B cell (primary cell): ENCODE measurements at regions of chr1 and their contacts with region 1.

Region 1: DNA sequence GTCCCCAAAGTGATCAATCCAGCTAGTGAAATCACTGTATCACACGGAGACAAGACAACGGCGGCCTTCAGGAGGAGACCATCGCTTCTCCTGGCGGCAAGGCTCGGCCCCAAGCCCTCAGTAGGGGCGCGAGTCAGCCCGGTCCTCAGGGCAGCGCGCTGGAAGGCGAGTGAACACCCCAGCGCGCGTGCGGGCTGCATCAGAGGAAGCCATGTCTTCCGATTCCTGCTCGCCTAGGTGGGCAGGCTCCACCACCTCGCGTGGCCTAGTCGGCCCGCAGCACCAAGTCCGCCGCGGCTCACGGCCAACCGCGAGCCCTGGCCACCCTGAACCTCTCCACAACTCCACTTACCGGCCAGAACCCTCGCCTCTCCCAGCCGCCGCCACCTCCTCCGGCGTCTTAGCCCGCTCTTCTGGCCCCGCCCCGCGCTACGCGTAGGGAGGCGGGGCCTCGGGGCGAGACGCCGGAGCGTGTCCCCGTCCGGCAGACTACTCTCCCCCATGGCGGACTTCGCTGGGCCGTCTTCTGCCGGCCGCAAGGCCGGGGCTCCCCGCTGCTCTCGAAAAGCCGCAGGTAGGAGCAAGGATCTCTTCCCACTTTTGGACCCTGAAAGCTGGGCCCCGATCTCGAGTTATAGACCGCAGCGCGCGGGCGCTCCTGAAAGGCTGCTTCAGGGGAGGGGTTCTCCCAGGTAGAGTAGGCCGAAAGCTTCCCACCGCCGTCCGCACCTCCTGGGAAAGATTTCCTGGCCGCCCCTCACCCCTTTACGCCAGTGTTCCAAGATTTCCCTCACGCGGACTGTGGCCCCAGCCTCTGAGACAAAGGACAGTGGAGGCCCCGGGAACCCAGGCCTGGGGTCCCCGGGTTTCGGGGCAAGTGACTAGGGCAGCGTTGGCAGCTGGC is at the starts of genes GLMN and RPAP2:
- DNase-seq: peak; percentile 90
- ATAC-seq: peak; percentile 95
- H3K4me3 ChIP-seq: peak within 1 kb of the TSS; percentile 58 to 94 (median 90)
- H3K4me3 Mint-ChIP-seq: peak within 1 kb of the TSS; percentile 100
- H3K27ac ChIP-seq: peak within 1 kb of the TSS; percentile 92 to 95
- H3K27ac Mint-ChIP-seq: peak within 1 kb of the TSS; percentile 98
- H3K4me1 ChIP-seq: peaks cover 9 to 17% of the 10 kb centered on the region in 2 donors
- H3K4me1 Mint-ChIP-seq: peaks cover 27% of the 10 kb centered on the region
- H3K27me3 ChIP-seq: no peaks in the 10 kb centered on the region
- H3K27me3 Mint-ChIP-seq: no peaks in the 10 kb centered on the region
- CTCF ChIP-seq: peak; percentile 20
- total RNA-seq, gene GLMN: 13.6 and 15.7 TPM in 2 replicates
- total RNA-seq, gene RPAP2: 31.6 and 33.8 TPM in 2 replicates

Region 2: GRCh38 chr1:91500756-91501522 is 797.9 kb before region 1 on chr1 and contains the start of gene CDC7:
- CTCF ChIA-PET with region 1: no interaction called
- POLR2A ChIA-PET with region 1: no interaction called
- intact Hi-C with region 1: loop called (anchors 5 kb)
- DNase-seq: peak; percentile 92
- ATAC-seq: peak; percentile 87
- H3K4me3 ChIP-seq: peak within 1 kb of the TSS; percentile 85 to 95 (median 90)
- H3K4me3 Mint-ChIP-seq: no peak within 1 kb of the TSS
- H3K27ac ChIP-seq: peak within 1 kb of the TSS; percentile 61 to 82
- H3K27ac Mint-ChIP-seq: no peak within 1 kb of the TSS
- H3K4me1 ChIP-seq: peaks cover 14 to 15% of the 10 kb centered on the region in 2 donors
- H3K4me1 Mint-ChIP-seq: peaks cover 17% of the 10 kb centered on the region
- H3K27me3 ChIP-seq: no peaks in the 10 kb centered on the region
- H3K27me3 Mint-ChIP-seq: no peaks in the 10 kb centered on the region
- CTCF ChIP-seq: peak; percentile 59
- total RNA-seq, gene CDC7: 7.4 and 8.7 TPM in 2 replicates

Region 3: DNA sequence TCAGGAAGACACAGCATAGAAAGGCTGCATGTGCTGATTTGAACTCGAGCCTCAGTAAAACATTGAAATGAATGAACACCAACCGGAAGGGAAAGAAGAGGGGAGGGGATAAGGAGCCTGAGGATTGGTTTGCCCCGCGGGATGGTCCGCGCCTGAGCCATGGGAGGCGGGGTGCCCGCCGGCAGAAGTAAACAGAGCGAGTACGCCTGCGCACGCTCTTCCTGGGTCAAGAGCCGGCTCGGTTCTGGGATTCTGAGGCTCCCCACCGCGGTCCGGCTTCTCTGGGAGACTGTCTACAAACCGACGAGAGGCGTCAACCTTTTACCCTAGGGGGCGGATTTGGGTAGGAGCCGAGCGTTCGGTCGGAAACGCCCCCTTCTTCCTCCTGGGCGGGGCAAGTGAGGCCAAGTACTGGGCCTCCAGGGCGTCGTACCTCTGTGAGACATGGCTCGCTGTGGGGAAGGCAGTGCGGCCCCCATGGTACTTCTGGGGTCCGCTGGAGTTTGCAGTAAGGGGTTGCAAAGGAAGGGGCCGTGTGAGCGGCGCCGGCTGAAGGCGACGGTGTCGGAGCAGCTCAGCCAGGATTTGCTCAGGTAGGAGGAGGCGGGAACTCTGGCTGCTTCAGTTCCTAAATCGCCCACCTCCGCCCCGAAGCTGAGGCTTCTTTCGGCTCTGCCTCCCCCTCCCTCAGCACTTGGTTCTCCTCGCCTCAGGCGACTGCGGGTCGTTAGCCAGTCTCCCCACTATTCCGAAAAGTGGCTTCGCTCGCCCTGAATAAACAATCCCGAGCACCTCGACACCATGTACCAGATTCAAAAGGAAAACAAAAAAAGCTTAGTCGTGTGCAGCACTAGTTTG is 218.5 kb before region 1 on chr1 and contains the start of gene BTBD8:
- CTCF ChIA-PET with region 1: no interaction called
- POLR2A ChIA-PET with region 1: no interaction called
- intact Hi-C with region 1: loop called (anchors 1 kb)
- DNase-seq: peak; percentile 84
- ATAC-seq: peak; percentile 99
- H3K4me3 ChIP-seq: peak within 1 kb of the TSS; percentile 44 to 75 (median 74)
- H3K4me3 Mint-ChIP-seq: peak within 1 kb of the TSS; percentile 98
- H3K27ac ChIP-seq: peak within 1 kb of the TSS in 1 of 2 donors; percentile 39
- H3K27ac Mint-ChIP-seq: peak within 1 kb of the TSS; percentile 84
- H3K4me1 ChIP-seq: peaks cover 0 to 11% of the 10 kb centered on the region in 2 donors
- H3K4me1 Mint-ChIP-seq: peaks cover 12% of the 10 kb centered on the region
- H3K27me3 ChIP-seq: no peaks in the 10 kb centered on the region
- H3K27me3 Mint-ChIP-seq: peaks cover 4% of the 10 kb centered on the region
- CTCF ChIP-seq: no peak
- total RNA-seq, gene BTBD8: 1.9 and 2.1 TPM in 2 replicates

Region 4: GRCh38 chr1:92310185-92310597 is 11.4 kb after region 1 on chr1:
- CTCF ChIA-PET with region 1: interaction called, 11 read pairs
- POLR2A ChIA-PET with region 1: no interaction called
- intact Hi-C with region 1: no loop called
- DNase-seq: peak; percentile 26
- ATAC-seq: no peak
- H3K4me3 ChIP-seq: no peak overlapping the region
- H3K4me3 Mint-ChIP-seq: no peak overlapping the region
- H3K27ac ChIP-seq: no peak overlapping the region
- H3K27ac Mint-ChIP-seq: no peak overlapping the region
- H3K4me1 ChIP-seq: no peaks in the 10 kb centered on the region
- H3K4me1 Mint-ChIP-seq: no peaks in the 10 kb centered on the region
- H3K27me3 ChIP-seq: no peaks in the 10 kb centered on the region
- H3K27me3 Mint-ChIP-seq: no peaks in the 10 kb centered on the region
- CTCF ChIP-seq: peak; percentile 76

Region 5: DNA sequence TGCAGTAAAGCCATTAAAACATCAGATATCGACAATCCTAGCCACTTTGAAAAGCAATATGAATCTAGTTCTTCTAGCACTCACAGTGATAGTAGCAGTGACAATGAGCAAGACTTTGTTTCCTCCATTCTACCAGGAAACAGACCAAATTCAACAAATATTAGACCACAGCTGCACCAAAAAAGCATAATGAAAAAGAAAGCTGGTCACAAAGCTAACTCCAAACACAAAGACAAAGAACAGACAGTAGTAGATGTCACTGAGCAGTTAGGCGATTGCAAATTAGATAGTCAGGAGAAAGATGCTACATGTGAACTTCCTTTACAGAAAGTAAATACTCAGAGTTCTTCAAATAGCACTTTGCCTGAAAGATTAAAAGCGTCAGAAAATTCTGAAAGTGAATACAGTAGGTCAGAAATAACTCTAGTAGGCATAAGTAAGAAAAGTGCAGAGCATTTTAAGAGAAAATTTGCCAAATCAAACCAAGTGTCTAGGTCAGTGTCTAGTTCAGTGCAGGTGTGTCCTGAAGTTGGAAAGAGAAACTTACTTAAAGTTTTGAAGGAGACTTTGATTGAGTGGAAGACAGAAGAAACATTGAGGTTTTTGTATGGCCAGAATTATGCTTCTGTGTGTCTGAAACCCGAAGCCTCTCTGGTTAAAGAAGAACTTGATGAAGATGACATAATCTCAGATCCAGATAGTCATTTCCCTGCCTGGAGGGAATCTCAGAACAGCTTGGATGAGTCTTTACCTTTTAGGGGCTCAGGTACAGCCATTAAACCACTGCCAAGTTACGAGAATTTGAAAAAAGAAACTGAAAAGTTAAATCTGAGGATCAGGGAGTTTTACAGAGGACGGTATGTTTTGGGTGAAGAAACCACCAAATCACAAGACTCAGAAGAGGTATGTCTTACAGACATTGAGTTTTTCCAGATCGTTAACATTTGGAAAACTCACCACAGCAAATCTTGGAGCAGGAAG is 24.9 kb after region 1 on chr1:
- CTCF ChIA-PET with region 1: no interaction called
- POLR2A ChIA-PET with region 1: no interaction called
- intact Hi-C with region 1: no loop called
- DNase-seq: no peak
- ATAC-seq: no peak
- H3K4me3 ChIP-seq: no peak overlapping the region
- H3K4me3 Mint-ChIP-seq: no peak overlapping the region
- H3K27ac ChIP-seq: no peak overlapping the region
- H3K27ac Mint-ChIP-seq: no peak overlapping the region
- H3K4me1 ChIP-seq: no peaks in the 10 kb centered on the region
- H3K4me1 Mint-ChIP-seq: no peaks in the 10 kb centered on the region
- H3K27me3 ChIP-seq: no peaks in the 10 kb centered on the region
- H3K27me3 Mint-ChIP-seq: no peaks in the 10 kb centered on the region
- CTCF ChIP-seq: no peak

Region 6: DNA sequence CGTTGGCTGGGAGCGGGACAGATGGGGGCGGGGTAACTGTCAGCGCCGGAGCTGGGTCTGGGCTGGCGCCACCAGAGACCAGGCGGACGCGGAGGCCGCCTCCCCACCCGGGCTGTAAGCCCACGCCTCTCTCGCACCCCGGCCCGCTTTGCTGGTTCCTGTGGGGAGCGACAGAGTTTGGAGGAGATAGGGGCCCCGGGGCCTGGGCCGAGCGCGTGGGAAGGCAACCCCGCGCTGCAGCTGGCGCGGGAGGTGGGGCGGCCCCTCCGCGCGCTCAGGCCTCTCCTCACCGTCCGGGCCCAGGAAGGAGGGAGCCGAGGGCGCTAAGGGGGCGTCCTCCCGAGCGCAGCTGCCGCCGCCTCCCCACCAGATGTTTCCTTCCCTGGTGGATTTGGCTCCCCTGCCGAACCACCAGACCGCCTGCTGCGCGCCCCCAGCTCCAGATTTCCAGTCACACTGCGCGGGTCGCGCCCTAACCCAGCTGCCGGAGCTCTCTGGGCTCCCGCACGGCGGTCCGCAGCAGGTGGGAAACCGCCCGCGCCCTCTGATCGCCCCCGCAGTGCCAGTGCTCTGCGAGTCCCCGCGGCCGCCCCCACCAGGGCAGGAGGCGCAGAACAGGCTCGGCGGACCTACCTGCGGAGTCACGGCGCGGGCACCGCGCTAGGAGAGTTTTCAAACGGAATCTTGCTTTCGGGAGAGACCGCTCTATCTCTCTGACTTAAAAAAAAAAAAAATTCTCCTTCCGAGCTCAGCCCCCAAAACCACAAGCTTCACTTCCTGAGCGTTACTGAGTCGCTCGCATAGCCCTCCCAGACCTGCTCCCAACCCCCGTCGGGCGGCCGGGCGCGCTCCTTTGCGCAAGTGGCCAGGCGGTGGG is 186.8 kb after region 1 on chr1:
- CTCF ChIA-PET with region 1: no interaction called
- POLR2A ChIA-PET with region 1: no interaction called
- intact Hi-C with region 1: loop called (anchors 5 kb)
- DNase-seq: peak; percentile 72
- ATAC-seq: peak; percentile 67
- H3K4me3 ChIP-seq: peak overlapping the region; percentile 42 to 70 (median 60)
- H3K4me3 Mint-ChIP-seq: peak overlapping the region; percentile 87
- H3K27ac ChIP-seq: no peak overlapping the region
- H3K27ac Mint-ChIP-seq: no peak overlapping the region
- H3K4me1 ChIP-seq: peaks cover 31 to 40% of the 10 kb centered on the region in 2 donors
- H3K4me1 Mint-ChIP-seq: peaks cover 32% of the 10 kb centered on the region
- H3K27me3 ChIP-seq: peaks cover 0 to 54% (median 19%) of the 10 kb centered on the region in 4 experiments
- H3K27me3 Mint-ChIP-seq: peaks cover 28% of the 10 kb centered on the region
- CTCF ChIP-seq: peak; percentile 64

Region 7: DNA sequence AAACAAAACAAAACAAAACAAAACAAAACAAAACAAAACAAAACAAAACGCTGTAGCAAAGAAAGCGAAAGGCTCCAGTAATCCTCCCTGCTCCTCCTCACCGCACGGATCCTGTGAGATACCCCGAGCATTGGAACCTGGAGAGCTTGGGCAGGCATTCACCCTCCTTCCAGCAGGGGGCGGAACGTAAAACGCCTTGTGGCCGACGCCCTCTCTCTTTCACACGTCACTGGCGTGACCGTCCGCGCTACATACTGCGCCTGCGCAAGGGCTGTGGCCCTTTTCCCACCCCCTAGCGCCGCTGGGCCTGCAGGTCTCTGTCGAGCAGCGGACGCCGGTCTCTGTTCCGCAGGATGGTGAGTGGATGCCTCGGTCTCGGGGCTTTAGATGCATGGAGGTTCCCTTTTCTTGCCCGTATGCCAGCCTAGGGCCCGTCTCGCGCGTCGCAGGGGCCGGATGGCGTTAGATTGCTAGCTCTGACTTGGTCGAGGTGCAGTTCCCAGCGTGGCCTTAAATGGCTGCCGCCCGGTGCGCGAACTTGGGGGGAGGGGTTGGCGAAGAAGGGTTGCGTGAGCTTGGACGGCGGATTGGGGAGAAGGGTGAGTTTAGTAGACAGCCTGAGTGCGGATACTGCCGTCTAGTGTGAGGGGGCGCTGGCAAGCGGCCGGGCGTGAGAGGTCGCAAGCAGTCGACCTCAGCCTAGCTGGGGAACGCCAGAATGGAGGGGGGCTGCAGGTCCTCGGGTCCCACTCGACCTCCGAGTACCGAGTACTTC is 533.1 kb after region 1 on chr1 and contains the start of gene RPL5:
- CTCF ChIA-PET with region 1: no interaction called
- POLR2A ChIA-PET with region 1: no interaction called
- intact Hi-C with region 1: loop called (anchors 5 kb)
- DNase-seq: peak; percentile 100
- ATAC-seq: peak; percentile 88
- H3K4me3 ChIP-seq: peak within 1 kb of the TSS; percentile 84 to 98 (median 92)
- H3K4me3 Mint-ChIP-seq: peak within 1 kb of the TSS; percentile 100
- H3K27ac ChIP-seq: peak within 1 kb of the TSS; percentile 90 to 96
- H3K27ac Mint-ChIP-seq: peak within 1 kb of the TSS; percentile 100
- H3K4me1 ChIP-seq: peaks cover 25 to 28% of the 10 kb centered on the region in 2 donors
- H3K4me1 Mint-ChIP-seq: peaks cover 47% of the 10 kb centered on the region
- H3K27me3 ChIP-seq: no peaks in the 10 kb centered on the region
- H3K27me3 Mint-ChIP-seq: no peaks in the 10 kb centered on the region
- CTCF ChIP-seq: peak; percentile 89
- total RNA-seq, gene RPL5: 1,049 and 1,104 TPM in 2 replicates

Region 8: GRCh38 chr1:92951141-92951582 is 652.3 kb after region 1 on chr1:
- CTCF ChIA-PET with region 1: no interaction called
- POLR2A ChIA-PET with region 1: no interaction called
- intact Hi-C with region 1: loop called (anchors 5 kb)
- DNase-seq: peak; percentile 83
- ATAC-seq: peak; percentile 80
- H3K4me3 ChIP-seq: peak overlapping the region in 3 of 5 experiments; percentile 8 to 32 (median 8)
- H3K4me3 Mint-ChIP-seq: no peak overlapping the region
- H3K27ac ChIP-seq: peak overlapping the region; percentile 71 to 73
- H3K27ac Mint-ChIP-seq: no peak overlapping the region
- H3K4me1 ChIP-seq: peaks cover 79 to 86% of the 10 kb centered on the region in 2 donors
- H3K4me1 Mint-ChIP-seq: peaks cover 52% of the 10 kb centered on the region
- H3K27me3 ChIP-seq: no peaks in the 10 kb centered on the region
- H3K27me3 Mint-ChIP-seq: no peaks in the 10 kb centered on the region
- CTCF ChIP-seq: no peak